Activated CD4-positive, alpha-beta T cell treated with anti-CD3 and anti-CD28 coated beads for 36 hours (primary cell): ENCODE measurements at regions of chr4 and their contacts with region 1.

Region 1: GRCh38 chr4:151721466-151721865 is 39.3 kb downstream of the GATB start:
- DNase-seq: no peak
- ATAC-seq: no peak
- H3K4me3 Mint-ChIP-seq: no peak overlapping the region
- H3K27ac Mint-ChIP-seq: no peak overlapping the region
- H3K4me1 Mint-ChIP-seq: peaks cover 4% of the 10 kb centered on the region
- H3K27me3 Mint-ChIP-seq: no peaks in the 10 kb centered on the region

Region 2: DNA sequence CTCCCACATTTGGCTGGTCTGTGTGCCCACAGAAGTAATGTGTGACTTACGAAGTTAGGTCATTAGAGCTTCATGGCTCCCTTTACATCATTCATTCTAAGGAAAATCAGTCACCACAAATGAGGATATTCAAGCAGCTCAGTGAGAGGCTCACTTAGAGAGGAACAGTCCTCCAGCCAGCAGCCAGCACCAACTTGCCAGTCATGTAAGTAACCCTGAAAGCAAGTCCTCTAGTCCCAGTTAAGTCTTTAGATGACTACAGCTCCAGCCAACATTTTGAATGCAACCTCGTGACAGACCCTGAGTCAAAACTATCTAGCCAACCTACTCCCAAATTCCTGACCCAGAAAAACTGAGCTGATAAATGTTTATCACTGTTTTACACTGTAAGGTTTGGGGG is 777.6 kb before region 1 on chr4:
- CTCF ChIA-PET with region 1: no interaction called
- POLR2A ChIA-PET with region 1: no interaction called
- intact Hi-C with region 1: loop called in 1 of 2 experiments (anchors 5 kb)
- DNase-seq: peak; percentile 50
- ATAC-seq: peak; percentile 85
- H3K4me3 Mint-ChIP-seq: no peak overlapping the region
- H3K27ac Mint-ChIP-seq: peak overlapping the region; percentile 13
- H3K4me1 Mint-ChIP-seq: peaks cover 61% of the 10 kb centered on the region
- H3K27me3 Mint-ChIP-seq: no peaks in the 10 kb centered on the region